H1 (cell line): ENCODE measurements at regions of chr6 and their contacts with region 1.

Region 1: DNA sequence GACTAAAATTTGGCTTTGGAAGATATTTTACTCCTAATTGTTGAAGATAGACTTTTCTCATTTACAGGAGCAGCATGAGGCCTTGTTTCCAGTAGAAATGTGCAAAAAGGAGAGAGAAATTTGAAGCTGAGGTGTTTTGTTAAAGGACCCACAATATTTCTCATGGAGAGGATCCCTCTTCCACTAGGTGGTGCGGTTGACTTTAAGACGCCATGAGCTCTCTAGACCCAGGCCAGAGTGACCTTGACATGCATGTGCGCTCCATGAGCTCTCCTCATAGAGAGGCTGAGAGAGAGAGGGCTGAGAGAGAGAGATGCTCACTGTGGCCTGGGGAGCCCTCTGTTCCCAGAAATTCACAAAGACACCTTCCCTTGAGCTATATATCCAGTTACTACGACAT is 861.2 kb upstream of the EYS start:
- DNase-seq: no peak
- H3K4me3 ChIP-seq: no peak overlapping the region
- H3K27ac ChIP-seq: no peak overlapping the region
- H3K4me1 ChIP-seq: no peaks in the 10 kb centered on the region
- H3K27me3 ChIP-seq: no peaks in the 10 kb centered on the region
- CTCF ChIP-seq: peak in 2 of 3 experiments; percentile 13 to 36; a peak in 3 of 4 replicates
- EP300 ChIP-seq: no peak
- POLR2A ChIP-seq: no peak
- RAD21 ChIP-seq: peak; percentile 38 to 59

Region 2: GRCh38 chr6:66558189-66558588 is 10.1 kb before region 1 on chr6:
- CTCF ChIA-PET with region 1: interaction called, 16 read pairs
- POLR2A ChIA-PET with region 1: no interaction called
- DNase-seq: no peak
- H3K4me3 ChIP-seq: no peak overlapping the region
- H3K27ac ChIP-seq: no peak overlapping the region
- H3K4me1 ChIP-seq: no peaks in the 10 kb centered on the region
- H3K27me3 ChIP-seq: no peaks in the 10 kb centered on the region
- CTCF ChIP-seq: peak in 2 of 3 experiments; percentile 17 to 52; a peak in 2 of 4 replicates
- EP300 ChIP-seq: no peak
- POLR2A ChIP-seq: no peak
- RAD21 ChIP-seq: peak; percentile 42 to 47